Activated B cell treated with CpG ODN at 0.5 μM for 24 hours (primary cell): ENCODE measurements at regions of chr20 and their contacts with region 1.

Region 1: DNA sequence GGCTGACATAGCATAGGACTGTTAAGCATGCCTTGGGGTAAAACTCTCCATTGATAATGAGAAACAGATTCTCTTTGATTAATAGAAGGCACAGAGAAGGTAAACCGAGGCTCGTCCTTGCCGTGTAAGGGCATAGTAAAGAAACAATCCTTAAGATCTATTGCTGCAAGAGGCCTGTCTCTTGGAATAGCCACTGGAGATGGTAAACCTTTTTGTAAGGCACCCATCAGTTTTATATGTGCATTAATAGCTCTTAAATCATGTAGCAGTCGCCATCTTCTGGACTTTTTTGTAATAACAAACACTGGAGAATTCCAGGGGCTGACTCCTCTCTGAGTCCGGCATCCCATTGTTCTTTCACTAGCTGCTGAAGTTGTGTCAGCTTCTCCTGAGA is 8.4 kb upstream of the ABHD12 start:
- DNase-seq: no peak
- ATAC-seq: peak; percentile 75
- H3K4me3 Mint-ChIP-seq: no peak overlapping the region
- H3K27ac Mint-ChIP-seq: no peak overlapping the region
- H3K4me1 Mint-ChIP-seq: peaks cover 5% of the 10 kb centered on the region
- H3K27me3 Mint-ChIP-seq: no peaks in the 10 kb centered on the region
- CTCF ChIP-seq: no peak

Region 2: GRCh38 chr20:24965065-24965929 is 433.7 kb before region 1 on chr20:
- CTCF ChIA-PET with region 1: no interaction called
- POLR2A ChIA-PET with region 1: no interaction called
- intact Hi-C with region 1: no loop called
- DNase-seq: no peak
- ATAC-seq: no peak
- H3K4me3 Mint-ChIP-seq: no peak overlapping the region
- H3K27ac Mint-ChIP-seq: no peak overlapping the region
- H3K4me1 Mint-ChIP-seq: peaks cover 2% of the 10 kb centered on the region
- H3K27me3 Mint-ChIP-seq: no peaks in the 10 kb centered on the region
- CTCF ChIP-seq: no peak

Region 3: GRCh38 chr20:25065625-25066338 is 333.3 kb before region 1 on chr20:
- CTCF ChIA-PET with region 1: no interaction called
- POLR2A ChIA-PET with region 1: no interaction called
- intact Hi-C with region 1: loop called (anchors 2 kb)
- DNase-seq: peak; percentile 48
- ATAC-seq: peak; percentile 86
- H3K4me3 Mint-ChIP-seq: no peak overlapping the region
- H3K27ac Mint-ChIP-seq: no peak overlapping the region
- H3K4me1 Mint-ChIP-seq: peaks cover 21% of the 10 kb centered on the region
- H3K27me3 Mint-ChIP-seq: peaks cover under 1% of the 10 kb centered on the region
- CTCF ChIP-seq: peak; percentile 36

Region 4: DNA sequence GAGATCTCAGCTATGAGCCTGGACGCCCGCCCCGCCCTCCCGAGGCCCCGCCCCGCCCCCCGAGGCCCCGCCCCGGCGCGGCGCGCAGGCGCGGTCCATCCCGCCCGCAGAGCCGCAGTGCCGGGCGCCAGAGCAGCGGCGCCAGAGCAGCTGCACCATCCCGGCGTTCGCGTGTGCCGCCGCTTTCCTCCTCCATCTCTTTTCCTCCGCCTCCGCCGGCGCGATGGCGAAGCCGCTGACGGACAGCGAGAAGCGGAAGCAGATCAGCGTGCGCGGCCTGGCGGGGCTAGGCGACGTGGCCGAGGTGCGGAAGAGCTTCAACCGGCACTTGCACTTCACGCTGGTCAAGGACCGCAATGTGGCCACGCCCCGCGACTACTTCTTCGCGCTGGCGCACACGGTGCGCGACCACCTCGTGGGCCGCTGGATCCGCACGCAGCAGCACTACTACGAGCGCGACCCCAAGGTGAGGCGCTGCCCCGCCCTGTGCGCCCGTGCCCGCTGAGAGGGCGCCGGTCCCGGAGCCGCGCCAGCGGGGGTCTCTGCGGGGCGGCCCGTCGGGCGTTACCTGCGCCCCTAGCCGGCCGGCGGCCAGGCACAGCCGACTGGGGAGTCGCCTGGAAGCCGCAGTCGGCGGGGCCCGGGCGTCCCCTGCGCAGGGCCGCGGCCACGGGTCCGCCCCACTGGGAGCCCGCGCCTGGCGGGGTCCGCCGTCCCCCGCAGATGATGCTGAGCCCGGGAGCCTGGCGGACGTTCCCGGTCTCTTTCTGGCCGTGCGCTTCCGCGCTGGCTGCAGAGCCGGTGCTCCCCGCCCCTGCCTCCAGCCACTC is 150.9 kb before region 1 on chr20 and contains the start of gene PYGB:
- CTCF ChIA-PET with region 1: interaction called, 7 read pairs
- POLR2A ChIA-PET with region 1: no interaction called
- intact Hi-C with region 1: loop called (anchors 2 kb)
- DNase-seq: peak; percentile 77
- ATAC-seq: peak; percentile 87
- H3K4me3 Mint-ChIP-seq: peak within 1 kb of the TSS; percentile 94
- H3K27ac Mint-ChIP-seq: peak within 1 kb of the TSS; percentile 86
- H3K4me1 Mint-ChIP-seq: peaks cover 25% of the 10 kb centered on the region
- H3K27me3 Mint-ChIP-seq: peaks cover 10% of the 10 kb centered on the region
- CTCF ChIP-seq: no peak
- total RNA-seq, gene PYGB: 21.5 and 23.5 TPM in 2 replicates

Region 5: GRCh38 chr20:25294459-25295385 is 104.3 kb before region 1 on chr20:
- CTCF ChIA-PET with region 1: interaction called, 57 read pairs
- POLR2A ChIA-PET with region 1: interaction called, 4 read pairs
- intact Hi-C with region 1: loop called (anchors 1 kb)
- DNase-seq: peak; percentile 54
- ATAC-seq: peak; percentile 92
- H3K4me3 Mint-ChIP-seq: no peak overlapping the region
- H3K27ac Mint-ChIP-seq: no peak overlapping the region
- H3K4me1 Mint-ChIP-seq: peaks cover 5% of the 10 kb centered on the region
- H3K27me3 Mint-ChIP-seq: no peaks in the 10 kb centered on the region
- CTCF ChIP-seq: no peak

Region 6: DNA sequence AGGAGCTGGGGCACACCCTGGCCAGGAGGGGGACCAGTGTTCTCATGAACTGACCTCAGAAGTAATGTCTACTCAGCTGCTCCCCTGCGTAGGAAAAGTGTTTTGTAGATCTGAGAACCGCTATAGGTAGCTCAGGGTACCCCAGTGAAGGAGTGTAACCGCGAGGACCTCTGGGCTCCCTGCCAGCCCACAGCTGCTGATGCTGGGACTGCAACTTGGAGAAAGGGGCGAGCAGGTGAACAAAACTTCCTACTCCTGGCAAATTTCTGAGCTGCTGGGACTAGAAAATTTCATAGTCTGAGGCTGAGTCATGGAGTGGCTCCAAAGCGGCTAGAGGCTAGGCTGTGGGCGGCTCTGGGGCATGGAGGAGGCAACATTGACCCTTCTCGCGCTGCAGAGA is 99.2 kb before region 1 on chr20:
- CTCF ChIA-PET with region 1: interaction called, 57 read pairs
- POLR2A ChIA-PET with region 1: interaction called, 4 read pairs
- intact Hi-C with region 1: no loop called
- DNase-seq: no peak
- ATAC-seq: no peak
- H3K4me3 Mint-ChIP-seq: no peak overlapping the region
- H3K27ac Mint-ChIP-seq: no peak overlapping the region
- H3K4me1 Mint-ChIP-seq: peaks cover 1% of the 10 kb centered on the region
- H3K27me3 Mint-ChIP-seq: no peaks in the 10 kb centered on the region
- CTCF ChIP-seq: no peak

Region 7: GRCh38 chr20:25310268-25310920 is 88.6 kb before region 1 on chr20:
- CTCF ChIA-PET with region 1: interaction called, 7 read pairs
- POLR2A ChIA-PET with region 1: interaction called, 3 read pairs
- intact Hi-C with region 1: loop called (anchors 1 kb)
- DNase-seq: no peak
- ATAC-seq: peak; percentile 94
- H3K4me3 Mint-ChIP-seq: peak overlapping the region; percentile 16
- H3K27ac Mint-ChIP-seq: peak overlapping the region; percentile 57
- H3K4me1 Mint-ChIP-seq: peaks cover 33% of the 10 kb centered on the region
- H3K27me3 Mint-ChIP-seq: no peaks in the 10 kb centered on the region
- CTCF ChIP-seq: no peak

Region 8: GRCh38 chr20:25318471-25319240 is 80.4 kb before region 1 on chr20:
- CTCF ChIA-PET with region 1: interaction called, 12 read pairs
- POLR2A ChIA-PET with region 1: interaction called, 3 read pairs
- intact Hi-C with region 1: loop called (anchors 2 kb)
- DNase-seq: peak; percentile 24
- ATAC-seq: peak; percentile 93
- H3K4me3 Mint-ChIP-seq: peak overlapping the region; percentile 52
- H3K27ac Mint-ChIP-seq: peak overlapping the region; percentile 87
- H3K4me1 Mint-ChIP-seq: peaks cover 39% of the 10 kb centered on the region
- H3K27me3 Mint-ChIP-seq: no peaks in the 10 kb centered on the region
- CTCF ChIP-seq: no peak